RWPE1 (cell line): ENCODE measurements at regions of chr11 and their contacts with region 1.

Region 1: GRCh38 chr11:22742157-22742613 is 75.8 kb downstream of the GAS2 start:
- DNase-seq: no peak
- H3K27ac ChIP-seq: no peak overlapping the region
- CTCF ChIP-seq: no peak

Region 2: DNA sequence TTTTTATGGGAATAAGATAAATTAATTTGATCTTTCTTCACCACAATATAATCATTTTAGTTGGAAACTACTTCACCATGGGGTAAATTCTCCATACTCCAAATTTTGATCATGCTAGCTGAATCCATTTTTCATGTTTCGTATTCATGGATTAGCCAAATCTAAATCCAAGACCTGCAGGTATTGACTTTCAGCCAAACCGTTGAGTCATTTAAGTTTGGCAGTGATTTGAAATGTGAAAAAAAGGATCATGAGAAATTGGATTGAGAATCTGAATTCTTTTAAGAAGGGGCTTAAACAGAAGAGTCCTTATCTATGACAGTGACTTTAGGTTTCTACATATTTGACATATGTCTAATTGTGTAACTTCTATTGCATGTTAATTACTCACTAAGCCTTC is 70.4 kb before region 1 on chr11:
- CTCF ChIA-PET with region 1: interaction called, 10 read pairs
- POLR2A ChIA-PET with region 1: no interaction called
- DNase-seq: no peak
- H3K27ac ChIP-seq: no peak overlapping the region
- CTCF ChIP-seq: no peak

Region 3: GRCh38 chr11:22725079-22725478 is 17.1 kb before region 1 on chr11:
- CTCF ChIA-PET with region 1: no interaction called
- POLR2A ChIA-PET with region 1: no interaction called
- DNase-seq: no peak
- H3K27ac ChIP-seq: no peak overlapping the region
- CTCF ChIP-seq: no peak